HCT116 (cell line): ENCODE measurements at regions of chr12 and their contacts with region 1.

Region 1: GRCh38 chr12:12327802-12328201 is 22.2 kb downstream of the MANSC1 start:
- DNase-seq: peak; percentile 62
- ATAC-seq: peak; percentile 80
- H3K4me3 ChIP-seq: no peak overlapping the region
- H3K27ac ChIP-seq: no peak overlapping the region
- H3K4me1 ChIP-seq: peaks cover 0 to 5% of the 10 kb centered on the region in 2 experiments; a peak in 1 of 4 replicates
- H3K27me3 ChIP-seq: no peaks in the 10 kb centered on the region
- CTCF ChIP-seq: peak; percentile 59 to 79 (median 78)
- POLR2A ChIP-seq: no peak
- RAD21 ChIP-seq: peak; percentile 83

Region 2: GRCh38 chr12:12039897-12040296 is 287.9 kb before region 1 on chr12:
- CTCF ChIA-PET with region 1: interaction called, 22 read pairs
- POLR2A ChIA-PET with region 1: no interaction called
- RAD21 ChIA-PET with region 1: no interaction called
- intact Hi-C with region 1: loop called (anchors 2 kb)
- DNase-seq: no peak
- ATAC-seq: no peak
- H3K4me3 ChIP-seq: no peak overlapping the region
- H3K27ac ChIP-seq: no peak overlapping the region
- H3K4me1 ChIP-seq: no peaks in the 10 kb centered on the region
- H3K27me3 ChIP-seq: no peaks in the 10 kb centered on the region
- CTCF ChIP-seq: no peak
- POLR2A ChIP-seq: no peak
- RAD21 ChIP-seq: no peak

Region 3: DNA sequence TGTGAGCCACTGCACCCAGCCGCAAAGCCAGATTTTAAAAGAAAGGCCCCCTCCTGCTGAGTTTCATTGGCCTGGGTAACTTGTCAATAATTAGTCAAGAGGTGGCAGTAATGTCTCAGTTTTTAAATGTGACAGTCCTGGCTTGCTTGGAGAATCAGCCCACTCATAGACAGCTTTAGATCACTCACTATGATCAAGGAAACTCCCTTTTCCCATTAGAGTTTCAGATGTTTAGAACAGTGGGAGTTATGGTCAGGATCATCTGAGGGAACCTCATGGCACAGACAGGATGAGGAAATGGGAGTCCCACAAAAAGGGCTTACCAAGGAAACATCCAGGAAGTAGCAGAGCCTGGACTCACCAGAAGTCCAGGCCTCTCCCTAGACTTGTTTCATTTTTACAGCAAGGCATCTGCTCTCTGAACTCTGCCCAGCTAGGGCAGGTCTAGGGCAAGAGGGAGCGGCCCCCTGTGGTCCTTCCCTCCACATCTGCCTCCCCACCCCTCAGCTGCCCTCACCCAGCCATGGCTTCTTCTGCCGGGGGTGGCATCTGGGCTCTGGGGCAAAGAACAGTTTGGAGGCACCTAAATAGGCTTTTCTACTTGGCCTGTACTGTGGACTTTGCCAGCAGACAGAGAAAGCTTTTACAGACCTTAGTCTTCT is 245.8 kb before region 1 on chr12:
- CTCF ChIA-PET with region 1: interaction called, 22 read pairs
- POLR2A ChIA-PET with region 1: no interaction called
- RAD21 ChIA-PET with region 1: interaction called, 3 to 5 read pairs
- intact Hi-C with region 1: no loop called
- DNase-seq: peak; percentile 29
- ATAC-seq: peak; percentile 93
- H3K4me3 ChIP-seq: no peak overlapping the region
- H3K27ac ChIP-seq: no peak overlapping the region
- H3K4me1 ChIP-seq: peaks cover 0 to 5% of the 10 kb centered on the region in 2 experiments; a peak in 1 of 4 replicates
- H3K27me3 ChIP-seq: no peaks in the 10 kb centered on the region
- CTCF ChIP-seq: peak; percentile 21 to 76 (median 42); a peak in 5 of 6 replicates
- POLR2A ChIP-seq: no peak
- RAD21 ChIP-seq: peak; percentile 83

Region 4: DNA sequence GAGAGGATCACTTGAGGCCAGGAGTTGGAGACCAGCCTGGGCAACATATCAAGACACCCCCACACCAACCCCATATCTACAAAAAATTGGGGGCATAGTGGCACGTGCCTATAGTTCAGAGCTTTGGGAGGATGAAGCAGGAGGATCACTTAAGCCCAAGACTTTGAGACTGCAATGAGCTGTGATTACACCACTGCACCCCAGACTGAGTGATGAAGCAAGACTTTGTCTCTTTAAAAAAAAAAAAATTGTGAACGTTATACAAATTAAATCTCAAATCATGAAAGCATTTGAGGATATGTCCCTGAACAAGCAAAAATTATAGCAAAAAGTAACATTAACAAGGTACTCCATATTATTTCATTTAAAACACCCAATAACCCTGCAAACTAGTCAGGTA is 63.9 kb before region 1 on chr12:
- CTCF ChIA-PET with region 1: no interaction called
- POLR2A ChIA-PET with region 1: no interaction called
- RAD21 ChIA-PET with region 1: no interaction called
- intact Hi-C with region 1: no loop called
- DNase-seq: no peak
- ATAC-seq: no peak
- H3K4me3 ChIP-seq: no peak overlapping the region
- H3K27ac ChIP-seq: no peak overlapping the region
- H3K4me1 ChIP-seq: peaks cover 9 to 18% of the 10 kb centered on the region in 2 experiments
- H3K27me3 ChIP-seq: no peaks in the 10 kb centered on the region
- CTCF ChIP-seq: no peak
- POLR2A ChIP-seq: no peak
- RAD21 ChIP-seq: no peak

Region 5: GRCh38 chr12:12315838-12316237 is 12.0 kb before region 1 on chr12:
- CTCF ChIA-PET with region 1: interaction called, 12 read pairs
- POLR2A ChIA-PET with region 1: no interaction called
- RAD21 ChIA-PET with region 1: no interaction called
- intact Hi-C with region 1: no loop called
- DNase-seq: no peak
- ATAC-seq: no peak
- H3K4me3 ChIP-seq: no peak overlapping the region
- H3K27ac ChIP-seq: no peak overlapping the region
- H3K4me1 ChIP-seq: no peaks in the 10 kb centered on the region
- H3K27me3 ChIP-seq: no peaks in the 10 kb centered on the region
- CTCF ChIP-seq: no peak
- POLR2A ChIP-seq: no peak
- RAD21 ChIP-seq: no peak

Region 6: DNA sequence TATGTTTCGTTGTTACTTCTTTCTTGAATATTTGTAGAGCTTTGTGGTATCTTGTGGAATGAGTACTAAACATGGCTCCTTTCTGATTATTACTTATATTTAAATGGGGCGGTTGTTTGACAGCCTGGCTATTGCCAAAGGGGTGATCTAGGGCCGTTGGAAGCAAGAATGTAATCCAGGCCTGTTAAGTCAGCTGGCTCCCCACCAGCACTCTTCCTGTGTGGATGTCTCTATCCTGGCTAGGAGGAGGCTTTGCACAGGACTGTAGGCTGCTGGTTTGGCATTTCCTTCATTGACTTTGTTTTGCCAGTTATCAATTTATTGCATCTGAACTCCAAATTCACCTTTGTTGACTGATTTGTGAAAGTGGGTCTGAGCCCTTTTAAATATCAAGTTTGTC is 722.0 kb after region 1 on chr12:
- CTCF ChIA-PET with region 1: no interaction called
- POLR2A ChIA-PET with region 1: no interaction called
- RAD21 ChIA-PET with region 1: no interaction called
- intact Hi-C with region 1: no loop called
- DNase-seq: no peak
- ATAC-seq: no peak
- H3K4me3 ChIP-seq: no peak overlapping the region
- H3K27ac ChIP-seq: no peak overlapping the region
- H3K4me1 ChIP-seq: peaks cover 0 to 7% of the 10 kb centered on the region in 2 experiments; a peak in 2 of 4 replicates
- H3K27me3 ChIP-seq: no peaks in the 10 kb centered on the region
- CTCF ChIP-seq: no peak
- POLR2A ChIP-seq: no peak
- RAD21 ChIP-seq: no peak